Adrenal gland (tissue), 19 donors: ENCODE measurements at regions of chr4 and their contacts with region 1.

Region 1: GRCh38 chr4:8176547-8177399 is 18.2 kb upstream of the ABLIM2 start:
- DNase-seq: peak in 5 of 7 donors; percentile 60 to 79 (median 71)
- H3K4me3 ChIP-seq: no peak overlapping the region
- H3K27ac ChIP-seq: no peak overlapping the region
- H3K4me1 ChIP-seq: peaks cover 1 to 13% of the 10 kb centered on the region in 2 donors
- H3K27me3 ChIP-seq: no peaks in the 10 kb centered on the region
- CTCF ChIP-seq: peak; percentile 72 to 88 (median 86)
- POLR2A ChIP-seq: no peak

Region 2: GRCh38 chr4:8079031-8079885 is 97.5 kb before region 1 on chr4:
- intact Hi-C with region 1: no loop called
- DNase-seq: peak in 3 of 7 donors; percentile 31 to 77 (median 34)
- H3K4me3 ChIP-seq: no peak overlapping the region
- H3K27ac ChIP-seq: peak overlapping the region in 1 of 5 donors; percentile 29
- H3K4me1 ChIP-seq: no peaks in the 10 kb centered on the region
- H3K27me3 ChIP-seq: no peaks in the 10 kb centered on the region
- CTCF ChIP-seq: no peak
- POLR2A ChIP-seq: no peak

Region 3: GRCh38 chr4:8403173-8403753 is 226.5 kb after region 1 on chr4:
- intact Hi-C with region 1: loop called in 1 of 2 experiments (anchors 5 kb)
- DNase-seq: peak; percentile 87 to 93 (median 91)
- H3K4me3 ChIP-seq: no peak overlapping the region
- H3K27ac ChIP-seq: peak overlapping the region in 2 of 5 donors; percentile 6 to 71
- H3K4me1 ChIP-seq: peaks cover 0 to 15% of the 10 kb centered on the region in 2 donors
- H3K27me3 ChIP-seq: no peaks in the 10 kb centered on the region
- CTCF ChIP-seq: peak; percentile 89 to 96 (median 94)
- POLR2A ChIP-seq: no peak